ENCODE measurements at regions of chr4 and their contacts with region 1.

Region 1: DNA sequence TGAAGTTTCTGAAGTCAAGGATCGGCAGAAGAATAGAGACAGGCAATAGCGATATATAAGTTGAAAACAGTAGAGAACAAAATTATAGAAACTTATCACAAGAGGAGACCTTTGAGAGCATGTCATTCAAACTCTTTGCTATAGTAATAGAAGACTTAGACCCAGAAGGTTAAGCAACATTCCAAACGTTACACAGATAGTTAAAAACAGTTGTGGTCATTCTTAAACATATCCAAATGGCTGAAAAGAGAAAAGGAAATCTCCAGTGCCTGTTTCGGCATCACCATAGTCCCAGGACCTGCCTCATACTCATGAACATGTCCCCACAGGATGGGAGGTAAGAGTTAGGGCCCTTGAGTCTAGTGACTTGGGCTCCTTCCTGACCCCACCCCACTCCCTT is 258.1 kb upstream of the NOCT start:
- DNase-seq: no peak
- H3K4me3 ChIP-seq: no peak overlapping the region
- H3K4me3 Mint-ChIP-seq: no peak overlapping the region
- H3K27ac Mint-ChIP-seq: no peak overlapping the region
- H3K4me1 ChIP-seq: peaks cover 26% of the 10 kb centered on the region
- H3K4me1 Mint-ChIP-seq: peaks cover 18% of the 10 kb centered on the region
- H3K27me3 ChIP-seq: no peaks in the 10 kb centered on the region
- H3K27me3 Mint-ChIP-seq: no peaks in the 10 kb centered on the region
- CTCF ChIP-seq: no peak

Region 2: DNA sequence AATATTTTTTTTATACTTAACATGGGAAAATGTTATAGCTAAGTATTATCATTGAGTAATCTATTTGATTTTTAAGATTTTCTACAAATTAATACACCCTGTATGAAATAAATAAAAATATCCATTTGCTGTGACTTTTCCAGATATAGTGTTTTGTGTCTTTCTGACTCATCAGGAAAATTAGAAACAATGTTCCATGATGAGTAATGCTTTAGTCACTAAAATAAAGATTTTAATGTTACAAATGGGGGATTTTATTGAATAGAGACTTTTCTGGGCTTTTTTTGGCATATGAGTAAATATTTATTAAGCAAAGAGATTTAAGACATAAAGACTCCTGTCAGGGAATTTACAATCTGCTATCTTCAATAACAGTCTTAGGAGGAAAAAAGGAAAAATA is 21.1 kb before region 1 on chr4:
- CTCF ChIA-PET with region 1: no interaction called
- POLR2A ChIA-PET with region 1: no interaction called
- intact Hi-C with region 1: no loop called
- DNase-seq: no peak
- H3K4me3 ChIP-seq: no peak overlapping the region
- H3K4me3 Mint-ChIP-seq: no peak overlapping the region
- H3K27ac Mint-ChIP-seq: no peak overlapping the region
- H3K4me1 ChIP-seq: no peaks in the 10 kb centered on the region
- H3K4me1 Mint-ChIP-seq: no peaks in the 10 kb centered on the region
- H3K27me3 ChIP-seq: no peaks in the 10 kb centered on the region
- H3K27me3 Mint-ChIP-seq: no peaks in the 10 kb centered on the region
- CTCF ChIP-seq: no peak

Region 3: DNA sequence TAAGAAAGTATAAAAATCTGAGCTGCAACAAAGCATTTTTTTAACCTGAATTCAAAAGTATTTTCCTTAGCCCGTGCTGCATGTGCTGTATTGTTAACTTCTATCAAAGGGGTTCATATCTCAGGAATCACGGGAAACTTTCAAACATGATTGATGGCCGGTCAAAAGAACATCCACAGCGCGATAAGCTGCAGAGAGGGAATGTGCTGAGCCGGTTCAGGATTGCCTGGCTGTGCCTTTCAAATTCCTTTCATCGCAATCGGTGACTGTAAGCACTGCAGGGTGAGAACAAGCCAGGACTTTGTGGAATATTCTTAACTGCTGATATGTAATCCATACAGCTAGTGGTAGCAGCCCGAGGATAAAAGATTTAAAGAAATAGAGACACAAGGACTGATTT is 47.3 kb after region 1 on chr4:
- CTCF ChIA-PET with region 1: no interaction called
- POLR2A ChIA-PET with region 1: no interaction called
- intact Hi-C with region 1: loop called (anchors 1 kb)
- DNase-seq: peak; percentile 81 to 89
- H3K4me3 ChIP-seq: peak overlapping the region; percentile 17
- H3K4me3 Mint-ChIP-seq: peak overlapping the region; percentile 65
- H3K27ac Mint-ChIP-seq: peak overlapping the region; percentile 84
- H3K4me1 ChIP-seq: peaks cover 31% of the 10 kb centered on the region
- H3K4me1 Mint-ChIP-seq: peaks cover 34% of the 10 kb centered on the region
- H3K27me3 ChIP-seq: no peaks in the 10 kb centered on the region
- H3K27me3 Mint-ChIP-seq: no peaks in the 10 kb centered on the region
- CTCF ChIP-seq: no peak

Region 4: GRCh38 chr4:138828926-138829325 is 71.5 kb after region 1 on chr4:
- CTCF ChIA-PET with region 1: no interaction called
- POLR2A ChIA-PET with region 1: no interaction called
- intact Hi-C with region 1: loop called (anchors 1 kb)
- DNase-seq: no peak
- H3K4me3 ChIP-seq: no peak overlapping the region
- H3K4me3 Mint-ChIP-seq: no peak overlapping the region
- H3K27ac Mint-ChIP-seq: no peak overlapping the region
- H3K4me1 ChIP-seq: peaks cover 6% of the 10 kb centered on the region; the same call in 1 of the 2 replicates
- H3K4me1 Mint-ChIP-seq: no peaks in the 10 kb centered on the region
- H3K27me3 ChIP-seq: no peaks in the 10 kb centered on the region
- H3K27me3 Mint-ChIP-seq: no peaks in the 10 kb centered on the region
- CTCF ChIP-seq: no peak

Measured in Caco-2 (cell line).